B cell (primary cell): ENCODE measurements at regions of chr6 and their contacts with region 1.

Region 1: DNA sequence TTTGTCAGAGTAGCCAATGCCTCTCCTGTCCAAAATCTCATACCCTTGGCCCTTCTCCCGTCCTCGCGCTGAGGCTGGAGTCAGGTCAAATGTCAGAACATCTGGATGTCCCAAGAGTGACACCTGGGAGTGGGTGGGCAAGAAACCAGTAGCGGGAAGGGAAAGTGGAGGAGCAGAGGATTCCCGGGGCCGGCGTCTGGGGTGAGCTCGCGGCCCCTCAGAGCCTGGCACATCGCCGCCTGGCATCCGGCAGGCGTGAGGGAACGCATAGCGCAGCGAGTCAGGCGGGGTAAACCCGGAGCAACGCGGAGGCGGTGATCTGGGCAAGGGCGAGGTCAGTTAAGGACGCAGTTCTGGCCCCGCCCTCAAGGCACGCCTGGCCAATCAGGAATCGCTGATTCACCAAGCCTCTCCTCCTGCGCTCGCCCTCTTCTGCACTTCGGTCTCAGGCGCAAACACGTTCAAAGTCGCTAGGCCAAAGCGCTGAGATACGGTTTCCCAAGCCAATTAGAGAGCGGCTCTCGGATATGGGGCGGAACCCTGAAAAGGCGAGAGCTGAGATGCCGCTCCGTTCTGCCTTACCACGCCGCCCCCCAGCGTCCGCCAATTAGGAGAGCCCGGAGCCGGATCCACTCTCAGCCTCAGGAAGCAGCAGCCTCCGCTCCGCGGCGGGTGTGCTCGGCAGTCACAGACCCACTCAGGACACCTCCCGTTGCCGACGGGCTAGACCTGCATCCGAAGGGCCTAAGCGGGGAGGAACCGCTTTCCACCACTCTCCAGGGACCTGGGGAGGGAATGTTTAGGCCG is 22.5 kb downstream of the VPS52 start:
- DNase-seq: peak; percentile 99
- ATAC-seq: peak; percentile 85
- H3K4me3 ChIP-seq: peak overlapping the region; percentile 63 to 84 (median 75)
- H3K4me3 Mint-ChIP-seq: peak overlapping the region; percentile 97
- H3K27ac ChIP-seq: peak overlapping the region; percentile 75 to 88
- H3K27ac Mint-ChIP-seq: peak overlapping the region; percentile 97
- H3K4me1 ChIP-seq: peaks cover 12 to 24% of the 10 kb centered on the region in 2 donors
- H3K4me1 Mint-ChIP-seq: peaks cover 31% of the 10 kb centered on the region
- H3K27me3 ChIP-seq: peaks cover 0 to 4% (median 0%) of the 10 kb centered on the region in 4 experiments
- H3K27me3 Mint-ChIP-seq: peaks cover 4% of the 10 kb centered on the region
- CTCF ChIP-seq: no peak

Region 2: DNA sequence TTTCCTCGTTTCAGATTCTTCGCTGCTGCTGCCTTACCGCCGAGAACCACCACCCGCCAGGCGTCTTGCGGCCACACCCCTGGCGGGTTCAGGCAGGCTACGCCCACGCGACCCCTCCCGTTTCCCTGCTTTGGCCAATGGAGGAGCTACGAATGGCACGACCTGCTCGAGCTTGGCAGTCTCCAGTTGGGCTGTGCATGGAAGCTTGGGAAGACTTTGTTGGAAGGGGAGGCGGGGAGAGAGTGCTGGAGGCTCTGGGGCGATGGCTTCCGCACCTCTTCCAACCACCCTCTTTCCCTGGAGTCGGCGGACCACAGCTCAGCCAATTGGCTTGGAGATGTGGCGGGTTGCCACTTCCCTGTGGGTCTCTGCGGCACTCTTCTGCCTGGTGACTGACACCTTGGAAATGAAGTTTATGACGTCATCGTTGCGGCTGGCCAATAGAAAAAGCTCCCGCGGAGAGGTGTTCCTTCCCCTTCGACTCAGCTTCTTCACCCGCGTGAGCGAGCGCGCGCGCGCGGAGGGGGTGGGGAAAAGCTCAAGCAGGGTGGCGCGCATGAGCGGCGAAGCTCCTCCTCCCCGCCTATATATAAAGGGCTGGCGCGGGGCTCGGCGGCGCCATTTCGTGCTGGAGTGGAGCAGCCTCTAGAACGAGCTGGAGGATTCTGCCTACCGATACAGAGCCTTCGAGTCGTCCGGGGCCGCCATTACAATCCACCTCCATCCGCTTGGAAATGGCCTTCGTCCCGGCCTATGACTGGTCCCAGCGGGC is 277.4 kb before region 1 on chr6:
- CTCF ChIA-PET with region 1: interaction called, 4 read pairs
- POLR2A ChIA-PET with region 1: interaction called, 12 read pairs
- intact Hi-C with region 1: no loop called
- DNase-seq: peak; percentile 100
- ATAC-seq: peak; percentile 50
- H3K4me3 ChIP-seq: peak overlapping the region; percentile 88 to 100 (median 96)
- H3K4me3 Mint-ChIP-seq: peak overlapping the region; percentile 96
- H3K27ac ChIP-seq: peak overlapping the region; percentile 96
- H3K27ac Mint-ChIP-seq: peak overlapping the region; percentile 99
- H3K4me1 ChIP-seq: peaks cover 32 to 43% of the 10 kb centered on the region in 2 donors
- H3K4me1 Mint-ChIP-seq: peaks cover 40% of the 10 kb centered on the region
- H3K27me3 ChIP-seq: no peaks in the 10 kb centered on the region
- H3K27me3 Mint-ChIP-seq: no peaks in the 10 kb centered on the region
- CTCF ChIP-seq: no peak

Region 3: GRCh38 chr6:33082702-33083101 is 166.4 kb before region 1 on chr6:
- CTCF ChIA-PET with region 1: interaction called, 10 read pairs
- POLR2A ChIA-PET with region 1: interaction called, 3 read pairs
- intact Hi-C with region 1: loop called (anchors 2 kb)
- DNase-seq: peak; percentile 65
- ATAC-seq: peak; percentile 63
- H3K4me3 ChIP-seq: peak overlapping the region in 1 of 5 experiments; percentile 7
- H3K4me3 Mint-ChIP-seq: peak overlapping the region; percentile 78
- H3K27ac ChIP-seq: peak overlapping the region; percentile 27 to 82
- H3K27ac Mint-ChIP-seq: peak overlapping the region; percentile 89
- H3K4me1 ChIP-seq: peaks cover 59 to 60% of the 10 kb centered on the region in 2 donors
- H3K4me1 Mint-ChIP-seq: peaks cover 72% of the 10 kb centered on the region
- H3K27me3 ChIP-seq: no peaks in the 10 kb centered on the region
- H3K27me3 Mint-ChIP-seq: no peaks in the 10 kb centered on the region
- CTCF ChIP-seq: peak; percentile 68

Region 4: GRCh38 chr6:33161354-33162331 is 87.5 kb before region 1 on chr6:
- CTCF ChIA-PET with region 1: interaction called, 80 read pairs
- POLR2A ChIA-PET with region 1: interaction called, 5 read pairs
- intact Hi-C with region 1: loop called (anchors 1 kb)
- DNase-seq: peak; percentile 87
- ATAC-seq: peak; percentile 97
- H3K4me3 ChIP-seq: peak overlapping the region in 4 of 5 experiments; percentile 52 to 68 (median 62)
- H3K4me3 Mint-ChIP-seq: peak overlapping the region; percentile 95
- H3K27ac ChIP-seq: peak overlapping the region in 1 of 2 donors; percentile 29
- H3K27ac Mint-ChIP-seq: peak overlapping the region; percentile 78
- H3K4me1 ChIP-seq: peaks cover 7 to 18% of the 10 kb centered on the region in 2 donors
- H3K4me1 Mint-ChIP-seq: peaks cover 17% of the 10 kb centered on the region
- H3K27me3 ChIP-seq: peaks cover 0 to 3% (median 0%) of the 10 kb centered on the region in 4 experiments
- H3K27me3 Mint-ChIP-seq: peaks cover 16% of the 10 kb centered on the region
- CTCF ChIP-seq: peak; percentile 93

Region 5: GRCh38 chr6:33276864-33277662 is 27.9 kb after region 1 on chr6 and contains the start of gene B3GALT4:
- CTCF ChIA-PET with region 1: interaction called, 14 read pairs
- POLR2A ChIA-PET with region 1: interaction called, 13 read pairs
- intact Hi-C with region 1: no loop called
- DNase-seq: peak; percentile 88
- ATAC-seq: peak; percentile 72
- H3K4me3 ChIP-seq: peak within 1 kb of the TSS; percentile 59 to 86 (median 78)
- H3K4me3 Mint-ChIP-seq: peak within 1 kb of the TSS; percentile 92
- H3K27ac ChIP-seq: peak within 1 kb of the TSS; percentile 80 to 87
- H3K27ac Mint-ChIP-seq: peak within 1 kb of the TSS; percentile 98
- H3K4me1 ChIP-seq: peaks cover 55 to 69% of the 10 kb centered on the region in 2 donors
- H3K4me1 Mint-ChIP-seq: peaks cover 69% of the 10 kb centered on the region
- H3K27me3 ChIP-seq: no peaks in the 10 kb centered on the region
- H3K27me3 Mint-ChIP-seq: no peaks in the 10 kb centered on the region
- CTCF ChIP-seq: peak; percentile 75
- total RNA-seq, gene B3GALT4: 44.1 and 46.0 TPM in 2 replicates

Region 6: GRCh38 chr6:33391278-33391921 is 142.3 kb after region 1 on chr6 and contains the start of gene KIFC1:
- CTCF ChIA-PET with region 1: no interaction called
- POLR2A ChIA-PET with region 1: no interaction called
- intact Hi-C with region 1: loop called (anchors 1 kb)
- DNase-seq: peak; percentile 100
- ATAC-seq: peak; percentile 85
- H3K4me3 ChIP-seq: peak within 1 kb of the TSS; percentile 54 to 73 (median 59)
- H3K4me3 Mint-ChIP-seq: peak within 1 kb of the TSS; percentile 80
- H3K27ac ChIP-seq: peak within 1 kb of the TSS; percentile 88
- H3K27ac Mint-ChIP-seq: peak within 1 kb of the TSS; percentile 95
- H3K4me1 ChIP-seq: peaks cover 12 to 18% of the 10 kb centered on the region in 2 donors
- H3K4me1 Mint-ChIP-seq: peaks cover 23% of the 10 kb centered on the region
- H3K27me3 ChIP-seq: no peaks in the 10 kb centered on the region
- H3K27me3 Mint-ChIP-seq: no peaks in the 10 kb centered on the region
- CTCF ChIP-seq: peak; percentile 88
- total RNA-seq, gene KIFC1: 0.70 and 0.79 TPM in 2 replicates

Region 7: GRCh38 chr6:33967966-33968724 is 719.0 kb after region 1 on chr6:
- CTCF ChIA-PET with region 1: no interaction called
- POLR2A ChIA-PET with region 1: no interaction called
- intact Hi-C with region 1: no loop called
- DNase-seq: no peak
- ATAC-seq: no peak
- H3K4me3 ChIP-seq: no peak overlapping the region
- H3K4me3 Mint-ChIP-seq: no peak overlapping the region
- H3K27ac ChIP-seq: no peak overlapping the region
- H3K27ac Mint-ChIP-seq: no peak overlapping the region
- H3K4me1 ChIP-seq: no peaks in the 10 kb centered on the region
- H3K4me1 Mint-ChIP-seq: no peaks in the 10 kb centered on the region
- H3K27me3 ChIP-seq: peaks cover 0 to 28% (median 10%) of the 10 kb centered on the region in 4 experiments
- H3K27me3 Mint-ChIP-seq: peaks cover 55% of the 10 kb centered on the region
- CTCF ChIP-seq: no peak